ENCODE measurements at regions of chrX and their contacts with region 1.

Region 1: GRCh38 chrX:120536061-120536460 is 24.7 kb downstream of the CUL4B start:
- DNase-seq: no peak
- ATAC-seq: no peak
- H3K4me3 ChIP-seq: no peak overlapping the region
- H3K27ac ChIP-seq: no peak overlapping the region
- H3K4me1 ChIP-seq: peaks cover 0 to 3% (median 0%) of the 10 kb centered on the region in 9 donors
- H3K27me3 ChIP-seq: peaks cover 0 to 3% (median 0%) of the 10 kb centered on the region in 7 donors
- CTCF ChIP-seq: no peak

Region 2: GRCh38 chrX:120629667-120630537 is 93.8 kb after region 1 on chrX and contains the start of gene C1GALT1C1:
- intact Hi-C with region 1: loop called in 1 of 10 experiments (anchors 10 kb)
- DNase-seq: peak; percentile 91 to 92
- ATAC-seq: peak; percentile 99 to 100 (median 99)
- H3K4me3 ChIP-seq: peak within 1 kb of the TSS; percentile 47 to 85 (median 75)
- H3K27ac ChIP-seq: peak within 1 kb of the TSS; percentile 67 to 94 (median 88)
- H3K4me1 ChIP-seq: peaks cover 0 to 26% (median 5%) of the 10 kb centered on the region in 9 donors
- H3K27me3 ChIP-seq: no peaks in the 10 kb centered on the region
- CTCF ChIP-seq: no peak
- total RNA-seq, gene C1GALT1C1: 13.6 to 22.7 (median 17.2) TPM

Measured in heart right ventricle (tissue), 16 donors.